ENCODE measurements at regions of chr11 and their contacts with region 1.

Region 1: GRCh38 chr11:62560566-62561103 is 13.1 kb downstream of the EEF1G start:
- DNase-seq: peak; percentile 97
- H3K4me3 ChIP-seq: peak overlapping the region in 2 of 4 donors; percentile 31 to 36
- H3K27ac ChIP-seq: peak overlapping the region; percentile 88 to 97 (median 94)
- H3K4me1 ChIP-seq: peaks cover 39 to 78% (median 62%) of the 10 kb centered on the region in 4 donors
- H3K27me3 ChIP-seq: no peaks in the 10 kb centered on the region
- CTCF ChIP-seq: peak; percentile 86 to 92 (median 88)
- EP300 ChIP-seq: no peak
- POLR2A ChIP-seq: no peak

Region 2: DNA sequence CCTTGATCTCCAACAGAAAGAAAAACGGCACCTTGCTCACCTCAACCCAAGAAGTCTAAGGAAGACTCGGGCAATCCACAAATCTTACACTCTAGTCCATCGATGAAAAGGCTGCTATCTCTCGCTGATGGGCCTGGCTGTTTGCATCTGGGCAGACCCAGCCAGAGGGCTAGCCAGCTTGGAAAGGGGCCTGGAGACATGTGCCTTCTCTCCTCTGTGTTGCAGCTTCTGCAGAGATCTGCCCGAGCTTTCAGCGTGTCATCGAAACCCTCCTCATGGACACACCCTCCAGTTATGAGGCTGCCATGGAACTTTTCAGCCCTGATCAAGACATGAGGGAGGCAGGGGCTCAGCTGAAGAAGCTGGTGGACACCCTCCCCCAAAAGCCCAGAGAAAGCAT is 138.6 kb before region 1 on chr11:
- intact Hi-C with region 1: loop called (anchors 5 kb)
- DNase-seq: no peak
- H3K4me3 ChIP-seq: no peak overlapping the region
- H3K27ac ChIP-seq: no peak overlapping the region
- H3K4me1 ChIP-seq: peaks cover 13 to 63% (median 48%) of the 10 kb centered on the region in 4 donors
- H3K27me3 ChIP-seq: no peaks in the 10 kb centered on the region
- CTCF ChIP-seq: no peak
- EP300 ChIP-seq: no peak
- POLR2A ChIP-seq: no peak

Region 3: DNA sequence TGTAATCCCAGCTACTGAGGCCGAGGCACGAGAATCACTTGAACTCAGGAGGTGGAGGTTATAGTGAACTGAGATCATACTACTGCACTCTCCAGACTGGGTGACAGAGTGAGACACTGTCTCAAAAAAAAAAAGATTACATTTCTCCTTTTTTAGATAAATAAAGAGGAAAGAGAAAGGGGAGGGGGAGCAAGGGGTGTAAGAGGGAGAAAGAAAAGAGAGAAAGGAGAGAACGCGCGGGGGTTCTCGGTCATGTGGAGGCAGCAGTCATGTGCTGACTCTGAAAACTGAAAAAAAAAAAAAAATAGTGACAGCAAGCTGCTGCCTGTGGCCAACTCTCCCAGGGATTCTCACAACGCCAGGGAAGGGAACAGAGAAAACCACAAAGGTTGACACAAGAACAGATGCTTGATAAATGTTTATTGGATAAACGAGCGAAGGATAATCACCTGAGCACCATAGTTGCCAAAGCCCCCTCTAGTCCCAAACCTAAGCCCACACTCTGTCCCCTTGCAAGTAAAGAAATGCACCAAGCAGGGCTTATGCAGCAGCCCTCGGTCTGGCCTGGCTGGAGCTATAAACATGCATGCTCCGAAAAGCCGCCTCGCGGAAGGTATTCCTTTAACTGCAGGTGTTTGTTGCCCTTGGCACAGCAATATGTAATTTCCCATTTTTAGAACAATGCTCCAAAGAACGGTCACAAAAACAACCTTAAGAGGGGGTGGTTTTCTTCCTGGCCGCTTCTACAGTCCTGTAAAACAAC is 127.3 kb before region 1 on chr11:
- intact Hi-C with region 1: no loop called
- DNase-seq: no peak
- H3K4me3 ChIP-seq: peak overlapping the region; percentile 12 to 27 (median 25)
- H3K27ac ChIP-seq: peak overlapping the region; percentile 77 to 88 (median 86)
- H3K4me1 ChIP-seq: peaks cover 36 to 72% (median 64%) of the 10 kb centered on the region in 4 donors
- H3K27me3 ChIP-seq: no peaks in the 10 kb centered on the region
- CTCF ChIP-seq: peak in 1 of 3 experiments; percentile 18
- EP300 ChIP-seq: no peak
- POLR2A ChIP-seq: no peak